Activated CD8-positive, alpha-beta T cell treated with anti-CD3 and anti-CD28 coated beads, Interleukin-2, amount 10 ng/mL, durations not matched to agents 7 days and 5 days (primary cell): ENCODE measurements at regions of chr14 and their contacts with region 1.

Region 1: DNA sequence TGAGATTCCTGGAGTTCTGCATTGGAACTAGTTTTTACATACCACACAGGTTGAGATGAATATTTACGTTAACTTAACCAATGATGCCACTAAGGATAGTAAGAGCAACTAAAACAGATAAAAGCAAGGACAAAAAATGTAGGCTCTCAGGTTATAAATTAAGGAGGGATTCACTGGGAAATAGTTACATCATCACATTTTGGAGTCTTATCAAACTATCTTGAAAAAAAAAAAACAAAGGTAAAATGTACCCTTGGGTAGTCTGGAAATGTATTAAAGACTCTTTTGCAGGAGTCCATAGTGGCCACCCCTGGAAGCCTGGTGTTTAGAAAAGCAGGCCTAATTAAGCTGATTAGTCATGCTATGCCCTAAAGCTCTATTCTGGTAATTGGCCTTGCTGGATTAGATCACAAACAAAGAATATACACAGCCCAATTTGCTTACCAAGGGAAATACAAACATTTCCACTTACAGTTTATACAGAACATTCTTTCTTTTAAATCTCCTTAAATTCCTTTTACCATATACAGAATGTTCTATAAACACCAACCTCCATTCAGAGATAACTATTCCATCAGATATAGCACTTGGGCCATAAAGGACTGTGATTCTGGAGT is 39.3 kb downstream of the SLC25A47 start:
- DNase-seq: no peak
- ATAC-seq: no peak
- H3K4me3 Mint-ChIP-seq: no peak overlapping the region
- H3K27ac Mint-ChIP-seq: no peak overlapping the region
- H3K4me1 Mint-ChIP-seq: peaks cover 40% of the 10 kb centered on the region
- H3K27me3 Mint-ChIP-seq: no peaks in the 10 kb centered on the region

Region 2: GRCh38 chr14:100083706-100084105 is 278.7 kb before region 1 on chr14:
- CTCF ChIA-PET with region 1: no interaction called
- POLR2A ChIA-PET with region 1: no interaction called
- DNase-seq: no peak
- ATAC-seq: no peak
- H3K4me3 Mint-ChIP-seq: peak overlapping the region; percentile 82
- H3K27ac Mint-ChIP-seq: peak overlapping the region; percentile 95
- H3K4me1 Mint-ChIP-seq: peaks cover 95% of the 10 kb centered on the region
- H3K27me3 Mint-ChIP-seq: no peaks in the 10 kb centered on the region

Region 3: GRCh38 chr14:100375963-100376735 is 13.7 kb after region 1 on chr14:
- CTCF ChIA-PET with region 1: interaction called, 15 read pairs
- POLR2A ChIA-PET with region 1: interaction called, 11 read pairs
- DNase-seq: peak; percentile 93
- ATAC-seq: peak; percentile 87
- H3K4me3 Mint-ChIP-seq: peak within 1 kb of the TSS; percentile 95
- H3K27ac Mint-ChIP-seq: peak within 1 kb of the TSS; percentile 96
- H3K4me1 Mint-ChIP-seq: peaks cover 50% of the 10 kb centered on the region
- H3K27me3 Mint-ChIP-seq: no peaks in the 10 kb centered on the region

Region 4: GRCh38 chr14:100400115-100400514 is 37.7 kb after region 1 on chr14:
- CTCF ChIA-PET with region 1: no interaction called
- POLR2A ChIA-PET with region 1: no interaction called
- DNase-seq: no peak
- ATAC-seq: no peak
- H3K4me3 Mint-ChIP-seq: no peak overlapping the region
- H3K27ac Mint-ChIP-seq: no peak overlapping the region
- H3K4me1 Mint-ChIP-seq: peaks cover 8% of the 10 kb centered on the region
- H3K27me3 Mint-ChIP-seq: no peaks in the 10 kb centered on the region